ENCODE measurements at regions of chr3 and their contacts with region 1.

Region 1: GRCh38 chr3:33440323-33441232 is at the start of gene UBP1:
- DNase-seq: peak; percentile 99 to 100
- ATAC-seq: peak; percentile 92 to 99 (median 97)
- H3K4me3 ChIP-seq: peak within 1 kb of the TSS; percentile 71 to 89 (median 85)
- H3K27ac ChIP-seq: peak within 1 kb of the TSS; percentile 80 to 99 (median 95)
- H3K4me1 ChIP-seq: peaks cover 2 to 47% (median 39%) of the 10 kb centered on the region in 9 donors
- H3K27me3 ChIP-seq: no peaks in the 10 kb centered on the region
- CTCF ChIP-seq: peak in 3 of 9 donors; percentile 5 to 17 (median 9)
- total RNA-seq, gene UBP1: 33.2 to 51.7 (median 42.3) TPM

Region 2: GRCh38 chr3:33331414-33331813 is 109.2 kb before region 1 on chr3:
- intact Hi-C with region 1: no loop called
- DNase-seq: no peak
- ATAC-seq: no peak
- H3K4me3 ChIP-seq: no peak overlapping the region
- H3K27ac ChIP-seq: no peak overlapping the region
- H3K4me1 ChIP-seq: no peaks in the 10 kb centered on the region
- H3K27me3 ChIP-seq: no peaks in the 10 kb centered on the region
- CTCF ChIP-seq: no peak

Region 3: GRCh38 chr3:33537133-33537532 is 96.6 kb after region 1 on chr3:
- intact Hi-C with region 1: loop called in 1 of 10 experiments (anchors 10 kb)
- DNase-seq: no peak
- ATAC-seq: peak in 6 of 8 donors; percentile 62 to 86 (median 76)
- H3K4me3 ChIP-seq: no peak overlapping the region
- H3K27ac ChIP-seq: peak overlapping the region in 9 of 10 donors; percentile 1 to 85 (median 75)
- H3K4me1 ChIP-seq: peaks cover 0 to 25% (median 0%) of the 10 kb centered on the region in 9 donors
- H3K27me3 ChIP-seq: no peaks in the 10 kb centered on the region
- CTCF ChIP-seq: no peak

Measured in heart right ventricle (tissue), 16 donors.